ENCODE measurements at regions of chr10 and their contacts with region 1.

Region 1: GRCh38 chr10:87771871-87772500 is 46.0 kb downstream of the ATAD1 start:
- DNase-seq: no peak
- H3K4me3 ChIP-seq: no peak overlapping the region
- H3K27ac ChIP-seq: no peak overlapping the region
- H3K4me1 ChIP-seq: no peaks in the 10 kb centered on the region
- H3K27me3 ChIP-seq: no peaks in the 10 kb centered on the region
- CTCF ChIP-seq: peak; percentile 53

Region 2: GRCh38 chr10:87538092-87539015 is 233.6 kb before region 1 on chr10:
- intact Hi-C with region 1: loop called (anchors 5 kb)
- DNase-seq: no peak
- H3K4me3 ChIP-seq: no peak overlapping the region
- H3K27ac ChIP-seq: no peak overlapping the region
- H3K4me1 ChIP-seq: no peaks in the 10 kb centered on the region
- H3K27me3 ChIP-seq: no peaks in the 10 kb centered on the region
- CTCF ChIP-seq: no peak

Region 3: DNA sequence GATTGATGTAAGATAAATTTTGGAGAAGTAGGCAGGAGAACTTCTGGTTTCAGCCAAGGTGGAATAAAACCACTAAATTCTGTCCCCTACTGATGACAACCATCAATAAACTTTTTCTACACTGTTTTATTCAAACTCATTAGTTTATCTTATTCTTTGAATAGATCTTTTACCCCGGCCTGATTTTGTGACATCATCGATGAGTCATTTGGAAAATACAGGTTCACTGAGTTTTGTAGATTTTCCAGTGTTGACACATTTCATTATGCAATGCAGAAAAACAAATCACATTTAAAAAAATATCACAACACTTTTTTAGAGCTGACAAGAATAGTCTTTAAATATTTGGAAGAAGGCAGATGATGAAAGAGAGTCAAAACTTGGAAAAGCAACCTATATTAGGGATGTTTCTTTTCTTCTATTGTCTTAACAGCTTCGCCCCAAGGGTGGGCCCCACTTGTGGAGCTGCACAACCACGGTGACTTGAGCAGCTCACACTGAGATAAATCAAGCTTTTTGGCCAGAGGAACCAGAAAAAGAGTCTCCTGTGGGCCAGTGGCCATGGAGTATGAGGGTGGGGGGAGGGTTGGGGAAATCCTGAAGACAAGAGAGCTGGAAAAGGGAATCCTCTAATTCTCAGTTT is 204.2 kb after region 1 on chr10:
- intact Hi-C with region 1: no loop called
- DNase-seq: no peak
- H3K4me3 ChIP-seq: no peak overlapping the region
- H3K27ac ChIP-seq: no peak overlapping the region
- H3K4me1 ChIP-seq: no peaks in the 10 kb centered on the region
- H3K27me3 ChIP-seq: no peaks in the 10 kb centered on the region
- CTCF ChIP-seq: no peak

Measured in colonic mucosa (tissue), 4 donors.